Activated CD4-positive, alpha-beta T cell treated with anti-CD3 and anti-CD28 coated beads for 36 hours (primary cell): ENCODE measurements at regions of chr5 and their contacts with region 1.

Region 1: GRCh38 chr5:96536991-96537785 is 104.1 kb upstream of the PCSK1 start:
- DNase-seq: no peak
- ATAC-seq: peak; percentile 86
- H3K4me3 Mint-ChIP-seq: peak overlapping the region; percentile 1
- H3K27ac Mint-ChIP-seq: peak overlapping the region; percentile 82
- H3K4me1 Mint-ChIP-seq: peaks cover 32% of the 10 kb centered on the region
- H3K27me3 Mint-ChIP-seq: no peaks in the 10 kb centered on the region

Region 2: GRCh38 chr5:96381526-96381925 is 155.7 kb before region 1 on chr5:
- CTCF ChIA-PET with region 1: no interaction called
- POLR2A ChIA-PET with region 1: no interaction called
- intact Hi-C with region 1: no loop called
- DNase-seq: peak; percentile 19
- ATAC-seq: no peak
- H3K4me3 Mint-ChIP-seq: no peak overlapping the region
- H3K27ac Mint-ChIP-seq: no peak overlapping the region
- H3K4me1 Mint-ChIP-seq: no peaks in the 10 kb centered on the region
- H3K27me3 Mint-ChIP-seq: peaks cover 13% of the 10 kb centered on the region

Region 3: DNA sequence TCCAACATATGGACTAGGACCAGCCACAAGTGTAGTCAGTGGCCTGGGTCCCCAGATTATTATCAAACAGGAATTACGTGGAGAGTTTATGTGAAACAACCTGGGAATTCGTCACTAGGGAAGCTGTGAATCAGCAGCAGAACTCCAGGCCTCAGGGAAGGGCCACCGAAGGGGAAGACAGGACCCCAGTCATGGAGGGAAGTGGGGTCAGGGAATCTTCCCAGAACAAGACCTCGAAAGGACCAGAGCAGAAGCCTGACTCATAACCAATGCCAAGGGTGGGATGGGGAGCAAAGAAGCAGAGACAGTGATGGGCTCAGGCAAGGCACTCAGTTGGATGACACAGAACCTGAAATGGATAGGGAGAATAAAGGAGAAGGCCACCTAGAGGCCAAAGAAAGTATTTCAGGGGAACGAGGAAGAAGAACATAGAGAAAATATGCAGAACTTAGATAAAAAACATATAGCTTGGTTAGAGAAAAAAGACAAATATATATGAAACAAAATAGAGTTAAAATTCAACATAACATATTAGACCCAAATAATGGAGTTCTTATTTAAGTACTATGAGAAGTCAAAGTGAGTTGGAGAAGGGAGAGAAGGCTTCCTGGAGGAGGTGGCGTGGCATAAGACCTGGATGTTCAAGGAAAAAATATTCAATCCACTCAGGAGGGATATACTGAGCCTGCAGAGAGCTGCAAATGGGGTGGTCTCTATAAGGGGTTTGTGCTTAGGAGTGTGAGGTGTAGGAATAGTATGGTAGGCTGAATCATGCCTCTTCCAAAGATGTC is 58.3 kb after region 1 on chr5:
- CTCF ChIA-PET with region 1: no interaction called
- POLR2A ChIA-PET with region 1: no interaction called
- intact Hi-C with region 1: loop called (anchors 5 kb)
- DNase-seq: peak; percentile 32
- ATAC-seq: peak; percentile 61
- H3K4me3 Mint-ChIP-seq: no peak overlapping the region
- H3K27ac Mint-ChIP-seq: no peak overlapping the region
- H3K4me1 Mint-ChIP-seq: peaks cover 17% of the 10 kb centered on the region
- H3K27me3 Mint-ChIP-seq: peaks cover 14% of the 10 kb centered on the region